ENCODE measurements at regions of chr10 and their contacts with region 1.

Region 1: GRCh38 chr10:70925377-70926225 is 37.2 kb upstream of the PCBD1 start:
- DNase-seq: peak; percentile 68
- ATAC-seq: peak; percentile 94
- H3K4me3 Mint-ChIP-seq: no peak overlapping the region
- H3K27ac Mint-ChIP-seq: no peak overlapping the region
- H3K4me1 Mint-ChIP-seq: no peaks in the 10 kb centered on the region
- H3K27me3 Mint-ChIP-seq: peaks cover 5% of the 10 kb centered on the region
- CTCF ChIP-seq: peak; percentile 94

Region 2: DNA sequence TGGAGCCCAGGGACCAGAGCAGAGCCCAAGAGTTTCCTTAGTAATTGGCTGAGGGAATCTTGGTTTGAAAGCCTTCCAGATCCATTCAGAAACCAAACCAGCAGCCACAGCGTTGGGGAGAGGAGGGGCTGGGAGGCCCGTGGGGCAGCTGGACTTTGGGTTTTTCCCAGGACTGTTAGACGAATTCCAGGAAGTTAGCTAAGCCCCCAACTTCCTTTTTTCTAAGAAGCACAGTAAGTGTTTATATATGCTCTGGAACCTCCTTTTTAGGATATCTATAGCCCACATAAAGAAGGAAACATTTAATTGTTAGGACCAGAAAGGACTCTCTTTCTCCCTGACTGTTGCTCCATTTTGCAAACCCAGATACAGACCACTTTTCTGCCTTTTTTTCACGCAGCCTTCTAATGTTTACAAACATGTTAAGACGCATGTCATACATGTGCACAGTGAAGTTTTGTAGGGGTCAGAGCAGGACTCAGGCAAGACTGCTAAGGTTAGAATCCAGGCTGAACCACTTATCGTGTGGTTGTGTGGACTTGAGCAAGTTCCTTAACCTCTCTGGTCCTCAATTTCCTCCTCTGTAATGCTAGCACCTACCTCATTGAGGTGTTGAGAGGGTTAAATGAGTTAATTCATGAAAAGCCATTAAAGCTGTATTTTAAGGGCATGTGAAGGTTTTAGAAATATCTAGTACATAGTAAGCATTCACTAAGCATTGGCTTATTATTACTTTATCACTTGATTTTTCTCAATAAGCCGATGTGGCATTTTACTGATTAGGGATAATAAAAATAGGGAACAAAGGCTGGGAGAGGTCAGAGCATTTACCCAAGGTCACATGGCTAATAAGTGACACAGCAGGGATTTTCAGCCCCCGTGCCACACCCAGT is 182.8 kb before region 1 on chr10:
- CTCF ChIA-PET with region 1: no interaction called
- POLR2A ChIA-PET with region 1: no interaction called
- intact Hi-C with region 1: no loop called
- DNase-seq: peak; percentile 42
- ATAC-seq: peak; percentile 62
- H3K4me3 Mint-ChIP-seq: no peak overlapping the region
- H3K27ac Mint-ChIP-seq: peak overlapping the region; percentile 73
- H3K4me1 Mint-ChIP-seq: peaks cover 10% of the 10 kb centered on the region
- H3K27me3 Mint-ChIP-seq: no peaks in the 10 kb centered on the region
- CTCF ChIP-seq: no peak

Region 3: GRCh38 chr10:70903262-70903921 is 22.2 kb before region 1 on chr10:
- CTCF ChIA-PET with region 1: interaction called, 29 read pairs
- POLR2A ChIA-PET with region 1: no interaction called
- intact Hi-C with region 1: no loop called
- DNase-seq: peak; percentile 50
- ATAC-seq: peak; percentile 51
- H3K4me3 Mint-ChIP-seq: no peak overlapping the region
- H3K27ac Mint-ChIP-seq: no peak overlapping the region
- H3K4me1 Mint-ChIP-seq: no peaks in the 10 kb centered on the region
- H3K27me3 Mint-ChIP-seq: no peaks in the 10 kb centered on the region
- CTCF ChIP-seq: peak; percentile 82

Region 4: DNA sequence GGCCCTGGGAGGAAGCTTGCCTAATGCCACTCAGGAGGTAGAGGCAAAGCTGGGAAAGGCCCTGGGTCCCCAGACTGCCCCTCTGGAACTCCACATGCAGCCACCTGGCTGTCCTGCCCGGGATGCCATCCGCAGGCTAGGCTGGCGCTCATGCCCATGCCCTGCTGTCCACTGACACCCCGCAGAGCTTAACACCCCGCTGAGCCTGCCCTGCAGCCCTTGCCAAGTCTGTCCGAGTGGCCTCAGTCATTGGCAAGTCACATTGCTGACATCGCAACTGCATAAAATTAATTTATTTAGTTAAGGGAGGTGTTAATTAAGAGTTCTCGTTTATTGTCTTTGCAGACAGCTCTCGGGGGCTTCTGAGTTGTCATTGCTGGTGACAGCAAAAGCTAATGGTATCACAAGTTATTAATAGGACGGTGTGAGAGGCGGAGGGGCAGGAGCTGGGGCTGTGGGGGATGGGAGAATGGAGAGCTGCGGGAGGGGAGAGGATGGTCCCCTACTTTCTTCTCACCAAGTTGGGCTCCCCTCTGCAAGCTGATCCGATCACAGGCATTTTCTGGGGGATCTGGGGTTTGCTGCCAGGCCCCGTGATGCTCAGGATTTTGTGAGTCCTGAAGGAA is 18.4 kb after region 1 on chr10:
- CTCF ChIA-PET with region 1: interaction called, 18 read pairs
- POLR2A ChIA-PET with region 1: no interaction called
- intact Hi-C with region 1: no loop called
- DNase-seq: no peak
- ATAC-seq: no peak
- H3K4me3 Mint-ChIP-seq: no peak overlapping the region
- H3K27ac Mint-ChIP-seq: no peak overlapping the region
- H3K4me1 Mint-ChIP-seq: no peaks in the 10 kb centered on the region
- H3K27me3 Mint-ChIP-seq: no peaks in the 10 kb centered on the region
- CTCF ChIP-seq: no peak

Region 5: DNA sequence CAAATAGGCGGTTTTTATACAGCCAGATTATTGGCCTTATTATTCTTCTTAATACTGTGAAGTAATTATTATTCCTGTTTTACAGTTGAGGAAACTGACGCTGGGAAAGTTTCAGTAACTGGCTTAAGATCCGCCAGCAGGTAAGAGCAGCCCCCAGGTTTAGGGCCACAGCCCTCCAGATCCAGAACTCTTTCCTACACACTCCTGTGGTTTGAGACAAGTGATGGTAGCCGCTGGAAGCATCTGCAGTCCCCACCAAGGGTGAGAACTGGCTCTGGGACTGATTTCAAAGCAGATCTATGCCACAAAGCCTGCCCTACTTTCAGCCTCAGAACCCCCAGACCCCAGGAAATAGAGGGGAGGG is 283.7 kb after region 1 on chr10:
- CTCF ChIA-PET with region 1: interaction called, 12 read pairs
- POLR2A ChIA-PET with region 1: no interaction called
- intact Hi-C with region 1: loop called (anchors 5 kb)
- DNase-seq: no peak
- ATAC-seq: no peak
- H3K4me3 Mint-ChIP-seq: no peak overlapping the region
- H3K27ac Mint-ChIP-seq: no peak overlapping the region
- H3K4me1 Mint-ChIP-seq: peaks cover 12% of the 10 kb centered on the region
- H3K27me3 Mint-ChIP-seq: peaks cover 57% of the 10 kb centered on the region
- CTCF ChIP-seq: no peak

Region 6: DNA sequence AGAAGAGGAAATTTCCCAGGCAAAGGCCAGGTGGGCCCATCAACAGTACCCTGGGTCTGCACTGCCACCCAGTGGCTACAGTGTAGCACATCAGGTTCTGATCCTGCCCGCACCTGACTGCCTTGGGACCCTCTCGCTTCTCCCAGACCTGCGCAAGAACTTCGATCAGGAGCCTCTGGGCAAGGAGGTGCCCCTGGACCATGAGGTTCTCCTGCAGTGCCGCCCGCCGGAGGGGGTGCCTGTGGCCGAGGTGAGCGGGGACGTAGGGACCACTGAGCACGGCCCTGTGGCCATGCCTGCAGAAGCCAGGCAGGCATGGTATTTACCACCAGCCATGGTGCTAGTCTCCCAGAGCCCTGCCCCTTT is 359.6 kb after region 1 on chr10:
- CTCF ChIA-PET with region 1: interaction called, 19 read pairs
- POLR2A ChIA-PET with region 1: no interaction called
- intact Hi-C with region 1: no loop called
- DNase-seq: peak; percentile 56
- ATAC-seq: peak; percentile 90
- H3K4me3 Mint-ChIP-seq: no peak overlapping the region
- H3K27ac Mint-ChIP-seq: no peak overlapping the region
- H3K4me1 Mint-ChIP-seq: no peaks in the 10 kb centered on the region
- H3K27me3 Mint-ChIP-seq: no peaks in the 10 kb centered on the region
- CTCF ChIP-seq: peak; percentile 72

Measured in activated CD8-positive, alpha-beta T cell treated with anti-CD3 and anti-CD28 coated beads for 36 hours (primary cell).